ENCODE measurements at regions of chr3 and their contacts with region 1.

Region 1: DNA sequence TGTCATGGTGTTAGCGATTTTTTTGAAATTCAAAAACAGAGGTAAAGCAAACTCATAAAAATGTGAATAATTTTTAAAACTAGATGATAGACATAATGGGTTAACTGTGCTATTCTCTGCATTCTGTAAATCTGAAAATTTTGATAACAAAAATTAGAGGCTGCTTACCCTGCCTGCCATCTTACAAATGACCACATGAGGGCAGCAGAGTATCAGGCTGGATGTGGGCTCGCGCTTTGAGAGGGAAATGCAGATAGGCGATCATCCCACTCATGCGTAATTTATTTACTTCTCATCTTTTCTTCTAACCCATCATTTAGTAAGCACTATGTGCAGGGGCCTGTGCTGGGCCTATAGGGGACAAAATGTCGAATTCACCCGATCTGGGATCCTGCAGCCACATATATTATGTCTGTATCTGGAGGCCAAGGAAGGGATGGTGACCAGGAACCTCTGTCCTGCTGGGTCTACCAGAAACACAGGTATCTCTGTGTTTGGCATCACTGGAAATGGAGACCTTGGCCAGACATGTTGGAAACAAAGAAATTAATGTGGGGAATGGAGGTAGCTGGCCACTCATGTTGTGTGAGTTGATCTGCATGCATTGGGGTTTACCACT is 7.8 kb upstream of the RAD18 start:
- ATAC-seq: peak; percentile 50 to 80 (median 70)
- H3K4me3 ChIP-seq: no peak overlapping the region
- H3K27ac ChIP-seq: no peak overlapping the region
- H3K4me1 ChIP-seq: peaks cover 2 to 9% of the 10 kb centered on the region in 2 donors

Region 2: DNA sequence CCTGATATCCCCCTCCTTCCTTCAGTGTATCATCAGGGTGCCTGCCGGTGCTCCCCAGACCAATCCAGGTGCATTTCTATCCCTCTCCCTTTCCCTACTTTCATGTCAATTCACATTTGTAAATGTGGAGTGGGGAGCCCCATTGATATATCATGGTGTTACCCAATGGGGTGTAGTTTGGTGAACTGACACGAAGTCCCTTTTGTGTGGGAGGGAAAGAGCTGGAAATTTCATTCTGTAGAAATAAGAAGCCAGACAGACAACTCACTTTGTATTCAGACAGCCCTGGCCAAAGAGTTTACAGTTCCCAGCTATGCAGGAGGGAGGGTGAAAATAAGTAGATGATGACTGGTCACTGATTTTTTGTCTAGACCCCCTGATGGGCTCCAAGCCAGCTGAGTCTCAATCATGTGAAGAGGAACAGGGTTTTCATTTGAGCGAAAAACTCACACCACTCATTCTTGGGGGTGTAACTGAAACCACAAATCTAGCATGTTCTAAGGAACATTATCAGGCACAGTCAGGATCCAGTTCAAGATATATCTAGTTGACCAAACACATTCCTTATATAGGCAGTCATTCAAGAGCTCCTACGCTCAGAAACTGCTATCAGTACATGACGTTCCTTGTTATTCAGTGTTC is 410.6 kb before region 1 on chr3:
- in situ Hi-C with region 1: no loop called
- ATAC-seq: no peak
- H3K4me3 ChIP-seq: no peak overlapping the region
- H3K27ac ChIP-seq: no peak overlapping the region
- H3K4me1 ChIP-seq: peaks cover 1 to 4% of the 10 kb centered on the region in 2 donors

Region 3: DNA sequence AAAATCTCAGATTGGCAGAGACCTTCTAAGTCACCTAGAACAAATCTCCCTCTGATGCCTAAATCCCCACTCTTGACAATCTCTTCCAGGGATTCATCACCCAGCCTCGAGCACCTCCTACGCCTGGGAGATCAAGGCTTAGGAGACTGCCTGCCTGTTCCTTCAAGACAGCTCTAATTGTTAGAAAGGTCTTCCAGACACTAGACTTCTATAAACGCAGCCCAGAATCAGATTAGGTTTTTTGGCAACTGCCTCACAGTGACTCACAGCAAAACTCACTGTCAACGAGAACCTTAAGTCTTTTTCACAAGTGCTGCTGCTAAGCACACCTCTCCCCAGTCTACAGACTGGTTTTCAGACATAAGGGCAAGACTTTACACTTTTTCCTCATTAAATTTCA is 255.2 kb after region 1 on chr3:
- in situ Hi-C with region 1: no loop called
- ATAC-seq: peak in 1 of 8 experiments; percentile 51
- H3K4me3 ChIP-seq: no peak overlapping the region
- H3K27ac ChIP-seq: no peak overlapping the region
- H3K4me1 ChIP-seq: peaks cover 52 to 63% of the 10 kb centered on the region in 2 donors

Region 4: GRCh38 chr3:9302425-9303181 is 331.5 kb after region 1 on chr3:
- in situ Hi-C with region 1: loop called in 8 of 9 experiments (anchors 5 to 25 kb)
- ATAC-seq: peak; percentile 90 to 99 (median 98)
- H3K4me3 ChIP-seq: peak overlapping the region; percentile 3 to 21 (median 12)
- H3K27ac ChIP-seq: peak overlapping the region; percentile 16 to 26
- H3K4me1 ChIP-seq: peaks cover 0 to 16% of the 10 kb centered on the region in 2 donors

Measured in motor neuron (in vitro differentiated cells).